Caco-2 (cell line): ENCODE measurements at regions of chr5 and their contacts with region 1.

Region 1: GRCh38 chr5:59264639-59265240 is 628.8 kb downstream of the PDE4D start:
- DNase-seq: peak in 1 of 2 experiments; percentile 34
- H3K4me3 ChIP-seq: no peak overlapping the region
- H3K4me3 Mint-ChIP-seq: no peak overlapping the region
- H3K27ac Mint-ChIP-seq: peak overlapping the region; percentile 81
- H3K4me1 ChIP-seq: peaks cover 37% of the 10 kb centered on the region
- H3K4me1 Mint-ChIP-seq: peaks cover 31% of the 10 kb centered on the region
- H3K27me3 ChIP-seq: no peaks in the 10 kb centered on the region
- H3K27me3 Mint-ChIP-seq: no peaks in the 10 kb centered on the region
- CTCF ChIP-seq: no peak

Region 2: GRCh38 chr5:59301693-59302092 is 37.0 kb after region 1 on chr5:
- CTCF ChIA-PET with region 1: no interaction called
- POLR2A ChIA-PET with region 1: no interaction called
- intact Hi-C with region 1: loop called (anchors 2 kb)
- DNase-seq: no peak
- H3K4me3 ChIP-seq: no peak overlapping the region
- H3K4me3 Mint-ChIP-seq: peak overlapping the region; percentile 1
- H3K27ac Mint-ChIP-seq: peak overlapping the region; percentile 9
- H3K4me1 ChIP-seq: peaks cover 42% of the 10 kb centered on the region
- H3K4me1 Mint-ChIP-seq: peaks cover 54% of the 10 kb centered on the region
- H3K27me3 ChIP-seq: no peaks in the 10 kb centered on the region
- H3K27me3 Mint-ChIP-seq: no peaks in the 10 kb centered on the region
- CTCF ChIP-seq: no peak

Region 3: DNA sequence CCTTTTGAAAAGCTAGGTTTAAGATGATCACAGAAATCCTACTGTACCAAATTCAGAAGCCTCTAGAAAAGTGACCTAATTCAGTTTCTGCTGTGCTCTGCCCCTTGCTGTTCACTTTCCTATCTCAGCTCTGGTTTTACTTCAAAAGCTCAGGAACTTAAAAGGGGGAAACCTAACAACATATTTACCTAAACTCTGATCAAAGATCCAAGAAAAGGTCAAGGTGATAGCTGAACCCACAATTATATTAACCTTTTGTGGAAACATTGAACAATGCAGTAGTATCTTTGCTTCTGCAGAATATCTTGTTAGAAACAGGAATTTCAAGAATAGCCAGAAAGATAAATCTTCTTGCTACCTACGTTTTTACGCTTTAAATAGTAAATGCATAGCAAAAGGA is 60.3 kb after region 1 on chr5:
- CTCF ChIA-PET with region 1: no interaction called
- POLR2A ChIA-PET with region 1: no interaction called
- intact Hi-C with region 1: loop called (anchors 2 kb)
- DNase-seq: no peak
- H3K4me3 ChIP-seq: no peak overlapping the region
- H3K4me3 Mint-ChIP-seq: no peak overlapping the region
- H3K27ac Mint-ChIP-seq: no peak overlapping the region
- H3K4me1 ChIP-seq: peaks cover 7% of the 10 kb centered on the region
- H3K4me1 Mint-ChIP-seq: peaks cover 7% of the 10 kb centered on the region
- H3K27me3 ChIP-seq: no peaks in the 10 kb centered on the region
- H3K27me3 Mint-ChIP-seq: no peaks in the 10 kb centered on the region
- CTCF ChIP-seq: no peak